ENCODE measurements at regions of chr1 and their contacts with region 1.

Region 1: DNA sequence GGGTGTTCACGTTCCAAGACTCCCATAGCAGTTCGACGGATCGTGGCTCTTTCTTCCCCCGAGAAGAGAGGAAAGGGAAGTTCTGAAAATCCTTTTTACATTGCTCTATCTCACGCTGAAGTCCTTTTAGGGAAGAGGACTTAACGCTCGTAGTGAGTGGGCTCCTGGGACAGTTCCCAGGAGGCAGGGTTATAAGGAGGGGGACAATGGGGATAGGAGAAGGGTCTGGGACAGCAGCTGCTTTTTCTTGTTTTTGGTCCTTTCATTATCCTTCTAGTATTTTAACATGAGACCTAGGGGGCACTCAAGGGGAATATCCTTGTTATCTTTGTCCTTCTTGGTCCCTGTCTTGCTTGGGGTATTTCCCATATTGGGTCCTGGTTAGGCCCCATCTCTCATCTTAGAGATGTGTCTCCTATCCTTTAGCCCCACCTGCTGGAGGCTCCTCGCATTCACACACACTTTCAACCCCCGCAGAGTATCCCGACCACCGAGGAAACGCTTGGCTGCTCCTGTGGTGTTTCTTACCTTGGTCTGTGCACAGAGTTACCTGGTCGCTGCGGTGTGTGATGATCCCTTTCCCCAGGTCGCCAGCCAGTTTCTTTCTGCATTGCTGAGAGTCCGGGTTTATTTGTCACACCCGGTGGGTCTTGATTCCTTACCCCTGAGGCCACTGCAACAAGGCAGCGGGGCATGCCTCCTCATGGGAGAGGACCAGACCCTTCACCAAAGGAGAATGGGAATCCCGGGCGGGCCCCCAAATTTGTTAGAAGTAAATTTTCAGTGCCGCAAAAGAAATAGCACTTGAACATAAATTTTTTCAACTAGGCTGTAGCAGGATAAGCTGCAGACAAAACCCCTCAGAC is 29.7 kb downstream of the SCCPDH start:
- DNase-seq: peak; percentile 42 to 53
- ATAC-seq: peak; percentile 43 to 86 (median 76)
- H3K4me3 ChIP-seq: no peak overlapping the region
- H3K27ac ChIP-seq: no peak overlapping the region
- H3K4me1 ChIP-seq: no peaks in the 10 kb centered on the region
- H3K27me3 ChIP-seq: no peaks in the 10 kb centered on the region
- CTCF ChIP-seq: peak; percentile 51 to 81 (median 76)

Region 2: GRCh38 chr1:246151796-246152434 is 602.0 kb before region 1 on chr1:
- intact Hi-C with region 1: no loop called
- DNase-seq: no peak
- ATAC-seq: no peak
- H3K4me3 ChIP-seq: no peak overlapping the region
- H3K27ac ChIP-seq: peak overlapping the region in 2 of 10 donors; percentile 25 to 71
- H3K4me1 ChIP-seq: peaks cover 0 to 32% (median 5%) of the 10 kb centered on the region in 9 donors
- H3K27me3 ChIP-seq: no peaks in the 10 kb centered on the region
- CTCF ChIP-seq: no peak

Region 3: GRCh38 chr1:246689409-246690008 is 64.4 kb before region 1 on chr1:
- intact Hi-C with region 1: loop called in 1 of 10 experiments (anchors 5 kb)
- DNase-seq: peak; percentile 54 to 64
- ATAC-seq: peak; percentile 81 to 89 (median 85)
- H3K4me3 ChIP-seq: peak overlapping the region in 9 of 10 donors; percentile 14 to 52 (median 46)
- H3K27ac ChIP-seq: peak overlapping the region in 7 of 10 donors; percentile 19 to 73 (median 30)
- H3K4me1 ChIP-seq: peaks cover 0 to 26% (median 9%) of the 10 kb centered on the region in 9 donors
- H3K27me3 ChIP-seq: no peaks in the 10 kb centered on the region
- CTCF ChIP-seq: peak; percentile 59 to 84 (median 81)

Region 4: GRCh38 chr1:246907472-246907871 is 153.6 kb after region 1 on chr1:
- intact Hi-C with region 1: no loop called
- DNase-seq: peak in 1 of 2 donors; percentile 28
- ATAC-seq: peak in 5 of 8 donors; percentile 61 to 82 (median 78)
- H3K4me3 ChIP-seq: no peak overlapping the region
- H3K27ac ChIP-seq: no peak overlapping the region
- H3K4me1 ChIP-seq: peaks cover 0 to 19% (median 6%) of the 10 kb centered on the region in 9 donors
- H3K27me3 ChIP-seq: no peaks in the 10 kb centered on the region
- CTCF ChIP-seq: peak in 8 of 9 donors; percentile 13 to 70 (median 57)